Breast epithelium (tissue), 4 donors: ENCODE measurements at regions of chr2 and their contacts with region 1.

Region 1: GRCh38 chr2:204255526-204255925 is 289.7 kb upstream of the PARD3B start:
- DNase-seq: no peak
- H3K4me3 ChIP-seq: no peak overlapping the region
- H3K27ac ChIP-seq: no peak overlapping the region
- H3K4me1 ChIP-seq: no peaks in the 10 kb centered on the region
- H3K27me3 ChIP-seq: no peaks in the 10 kb centered on the region
- CTCF ChIP-seq: no peak
- POLR2A ChIP-seq: no peak

Region 2: DNA sequence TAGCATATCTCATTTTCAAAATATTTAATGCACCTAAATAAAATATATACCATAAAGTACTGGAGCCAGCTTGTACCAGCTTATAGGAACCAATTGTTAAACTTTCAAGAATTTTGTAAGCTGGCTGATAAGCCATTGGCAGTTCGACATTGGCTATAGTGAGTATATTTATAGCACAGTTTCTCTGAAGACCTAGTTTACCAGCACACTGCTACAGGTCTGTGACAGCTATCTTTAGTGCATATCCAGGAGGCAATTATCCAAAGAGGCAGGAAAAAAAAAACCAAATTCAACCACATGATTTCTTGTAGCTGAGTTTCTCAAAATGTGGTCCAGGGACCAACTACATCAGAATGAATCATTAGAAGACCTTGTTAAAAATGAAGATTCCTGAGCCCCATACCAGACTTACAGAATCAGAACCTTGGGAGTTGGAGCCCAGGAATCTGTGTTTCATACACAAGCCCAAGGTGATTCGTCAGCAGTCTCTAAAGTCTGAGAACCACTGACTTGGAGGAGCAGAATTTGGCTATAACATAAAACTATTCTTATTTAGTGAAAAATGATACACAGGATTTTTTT is 1147.8 kb after region 1 on chr2:
- intact Hi-C with region 1: loop called (anchors 5 kb)
- DNase-seq: no peak
- H3K4me3 ChIP-seq: no peak overlapping the region
- H3K27ac ChIP-seq: no peak overlapping the region
- H3K4me1 ChIP-seq: no peaks in the 10 kb centered on the region
- H3K27me3 ChIP-seq: no peaks in the 10 kb centered on the region
- CTCF ChIP-seq: no peak
- POLR2A ChIP-seq: no peak